Activated T-helper 1 cell treated with anti-CD3 and anti-CD28 coated beads, Interleukin-12 subunit alpha, Interleukin-12 subunit beta, Interleukin-2, Interleukin-4 antibody, amounts not matched to agents 30 ng/mL and 10 ng/mL and 1 ng/mL, durations not matched to agents 14 hours and 24 hours and 36 hours (primary cell): ENCODE measurements at regions of chr3 and their contacts with region 1.

Region 1: DNA sequence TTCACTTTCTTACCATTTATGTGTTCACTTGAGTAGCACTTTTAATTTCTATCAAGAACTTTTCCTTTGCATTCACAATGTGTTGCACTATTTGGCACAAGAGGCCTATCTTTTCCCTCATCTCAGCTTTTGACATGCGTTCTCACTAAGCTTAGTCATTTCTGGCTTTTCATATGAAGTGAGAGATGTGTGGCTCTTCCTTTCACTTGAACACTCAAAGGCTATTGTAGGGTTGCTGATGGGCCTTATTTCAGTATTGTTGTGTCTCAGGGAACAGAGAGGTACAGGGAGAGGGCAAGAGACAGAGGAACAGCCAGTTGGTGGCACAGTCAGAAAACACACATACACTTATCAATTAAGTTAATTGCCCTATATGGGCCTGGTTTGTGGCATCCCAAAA is 127.4 kb upstream of the MLF1 start:
- DNase-seq: no peak
- H3K4me3 Mint-ChIP-seq: no peak overlapping the region
- H3K27ac Mint-ChIP-seq: peak overlapping the region; percentile 8
- H3K4me1 Mint-ChIP-seq: peaks cover 12% of the 10 kb centered on the region
- H3K27me3 Mint-ChIP-seq: no peaks in the 10 kb centered on the region

Region 2: DNA sequence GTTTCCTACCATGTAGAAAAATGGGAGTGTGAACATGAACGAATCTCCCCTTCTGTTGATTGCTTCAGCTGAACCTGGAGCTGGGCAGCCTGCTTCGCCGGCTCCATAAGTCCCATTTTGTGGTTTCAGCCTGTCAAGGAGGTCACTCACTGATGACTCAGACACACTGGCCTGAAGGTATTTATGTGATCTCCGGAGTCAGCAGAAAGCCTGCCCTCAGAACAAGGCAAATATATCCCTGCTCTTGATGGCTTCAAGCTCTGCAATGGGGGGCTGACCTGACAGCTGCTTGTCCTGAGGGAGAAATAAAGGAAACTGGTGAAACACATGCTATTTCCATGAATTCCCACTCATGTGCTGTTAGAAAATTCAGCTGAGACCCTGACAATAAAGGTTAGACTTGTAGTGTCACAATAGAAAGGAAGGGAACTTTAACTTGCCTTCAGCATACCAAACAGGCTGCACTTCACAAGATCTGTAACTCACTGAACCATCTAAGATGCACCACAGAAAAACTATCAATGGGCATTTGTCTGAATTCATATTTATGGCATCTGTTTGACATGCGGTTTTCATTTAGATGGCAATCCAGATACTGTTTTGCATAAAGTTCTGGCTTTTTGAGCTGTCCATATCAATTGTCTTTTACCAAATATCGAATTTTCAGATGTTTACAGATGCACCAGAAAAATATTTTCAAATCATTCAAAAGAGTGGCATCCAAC is 658.4 kb before region 1 on chr3:
- intact Hi-C with region 1: no loop called
- DNase-seq: no peak
- H3K4me3 Mint-ChIP-seq: no peak overlapping the region
- H3K27ac Mint-ChIP-seq: no peak overlapping the region
- H3K4me1 Mint-ChIP-seq: no peaks in the 10 kb centered on the region
- H3K27me3 Mint-ChIP-seq: peaks cover 3% of the 10 kb centered on the region

Region 3: DNA sequence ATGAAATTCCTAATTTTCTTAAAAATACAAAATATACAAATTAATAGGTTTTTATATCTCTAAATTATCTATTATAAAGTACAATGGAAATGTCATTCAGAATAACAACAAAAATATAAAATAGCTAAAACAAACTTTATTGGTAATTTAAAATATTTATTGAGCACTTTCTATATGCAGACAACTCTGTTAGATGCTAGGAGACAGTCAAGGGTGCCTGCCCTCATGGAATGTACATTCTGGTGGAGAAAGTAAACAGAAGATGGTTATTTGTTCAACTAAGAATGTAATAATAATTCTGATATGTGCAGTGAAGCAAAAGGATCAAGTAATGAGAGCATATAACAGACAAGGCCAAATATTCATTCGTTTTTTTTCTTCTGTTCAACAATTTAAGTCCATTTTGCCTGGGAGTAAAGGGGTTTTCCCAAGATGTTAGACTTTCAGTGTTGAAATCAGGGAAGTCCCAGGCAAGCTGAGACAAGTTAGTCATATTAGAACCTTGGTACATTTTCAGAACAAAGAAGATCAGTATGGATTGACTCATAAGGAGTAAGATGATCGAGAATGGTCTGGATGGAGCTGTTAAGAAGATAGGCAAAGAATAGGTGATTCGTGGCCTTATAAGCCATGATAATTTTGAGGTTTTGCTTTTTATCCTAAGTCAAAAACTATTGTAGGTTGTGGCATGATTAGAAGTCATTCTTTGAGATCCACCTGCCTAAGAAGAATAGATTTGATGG is 22.8 kb before region 1 on chr3:
- intact Hi-C with region 1: loop called (anchors 1 kb)
- DNase-seq: no peak
- H3K4me3 Mint-ChIP-seq: no peak overlapping the region
- H3K27ac Mint-ChIP-seq: peak overlapping the region; percentile 8
- H3K4me1 Mint-ChIP-seq: peaks cover 14% of the 10 kb centered on the region
- H3K27me3 Mint-ChIP-seq: no peaks in the 10 kb centered on the region

Region 4: DNA sequence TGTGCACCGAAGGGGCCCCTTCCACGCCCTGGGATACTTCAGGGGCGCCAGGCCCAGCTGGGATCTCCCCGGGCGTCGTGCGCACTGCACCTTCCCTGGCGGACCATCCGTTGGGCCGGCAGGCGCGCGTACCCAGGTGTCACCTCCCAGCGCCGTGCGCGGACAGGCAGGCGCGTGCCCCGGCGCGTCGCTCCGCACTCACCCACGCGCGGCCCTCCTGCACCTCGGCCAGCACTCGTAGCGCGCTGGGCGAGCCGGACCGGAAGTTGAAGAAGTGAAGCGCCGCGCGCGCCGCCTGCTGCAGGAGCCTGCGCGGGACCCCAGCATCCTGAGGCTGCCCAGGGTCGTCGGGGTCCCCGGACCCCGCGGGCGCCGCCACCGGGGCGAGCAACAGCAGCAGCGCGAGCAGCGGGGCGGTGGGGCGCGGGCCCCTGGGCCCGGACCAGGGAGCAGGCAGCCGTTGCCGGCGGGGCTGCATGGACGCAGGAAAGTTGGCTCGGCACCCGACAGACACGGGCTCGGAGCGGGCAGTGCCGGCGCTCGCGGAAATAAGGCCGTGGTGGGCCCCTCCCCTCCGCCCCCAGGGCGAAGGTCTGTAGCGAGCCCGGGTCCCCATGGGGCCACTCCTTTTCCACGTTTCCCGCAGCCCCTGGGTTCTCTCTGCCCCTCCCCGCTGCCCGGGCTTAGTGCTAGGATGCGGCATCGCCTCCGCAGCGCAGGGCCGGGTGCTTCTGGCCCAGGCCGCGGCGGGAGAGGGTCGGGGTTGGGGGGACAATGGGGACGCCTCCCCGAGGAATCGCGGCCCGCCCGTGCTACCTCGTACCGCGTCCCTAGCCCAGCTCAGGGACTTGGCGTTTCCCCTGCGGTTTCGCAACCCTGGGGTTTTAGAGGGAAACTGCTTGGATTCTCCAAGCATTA is 288.6 kb after region 1 on chr3 and contains the start of gene RARRES1:
- intact Hi-C with region 1: no loop called
- DNase-seq: peak; percentile 19
- H3K4me3 Mint-ChIP-seq: peak within 1 kb of the TSS; percentile 49
- H3K27ac Mint-ChIP-seq: no peak within 1 kb of the TSS
- H3K4me1 Mint-ChIP-seq: peaks cover 12% of the 10 kb centered on the region
- H3K27me3 Mint-ChIP-seq: peaks cover 2% of the 10 kb centered on the region
- total RNA-seq, gene RARRES1: not detected in 2 replicates